ENCODE measurements at regions of chr6 and their contacts with region 1.

Region 1: DNA sequence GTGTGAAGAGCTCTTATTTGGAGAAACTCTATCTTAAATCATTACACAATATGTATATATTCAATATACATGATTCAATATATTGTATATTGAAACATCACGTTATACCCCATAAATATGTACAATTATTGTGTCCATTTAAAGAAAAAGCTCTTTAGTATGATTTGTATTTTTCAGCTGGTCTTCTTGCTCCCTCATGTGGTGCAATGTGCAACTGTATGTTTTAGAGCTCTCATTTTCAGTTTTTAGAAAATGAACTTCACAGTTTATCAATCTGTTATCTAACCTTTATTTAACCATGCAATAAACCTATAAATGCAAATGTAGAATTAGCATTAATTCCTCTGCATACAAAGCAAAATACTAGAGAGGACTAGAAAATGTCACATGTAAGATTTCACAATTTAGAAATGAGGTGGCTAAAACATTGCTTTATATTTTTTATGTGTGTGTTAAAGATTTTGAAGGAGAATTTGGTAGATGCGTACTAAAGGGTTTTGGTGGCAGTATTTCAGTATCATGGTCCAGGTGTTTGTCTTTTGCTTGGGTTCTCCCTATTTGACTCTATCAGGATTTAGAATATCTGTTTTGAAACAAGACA is 167.1 kb downstream of the PHF3 start:
- DNase-seq: peak; percentile 24 to 64 (median 53)
- H3K4me3 ChIP-seq: no peak overlapping the region
- H3K27ac ChIP-seq: no peak overlapping the region
- H3K4me1 ChIP-seq: peaks cover 5 to 28% (median 19%) of the 10 kb centered on the region in 4 experiments
- H3K27me3 ChIP-seq: no peaks in the 10 kb centered on the region

Region 2: GRCh38 chr6:63307581-63308246 is 495.0 kb before region 1 on chr6:
- CTCF ChIA-PET with region 1: interaction called, 19 read pairs
- POLR2A ChIA-PET with region 1: no interaction called
- DNase-seq: peak; percentile 17 to 56 (median 51)
- H3K4me3 ChIP-seq: no peak overlapping the region
- H3K27ac ChIP-seq: no peak overlapping the region
- H3K4me1 ChIP-seq: no peaks in the 10 kb centered on the region
- H3K27me3 ChIP-seq: no peaks in the 10 kb centered on the region

Region 3: GRCh38 chr6:63740709-63741108 is 62.0 kb before region 1 on chr6:
- CTCF ChIA-PET with region 1: no interaction called
- POLR2A ChIA-PET with region 1: no interaction called
- DNase-seq: no peak
- H3K4me3 ChIP-seq: no peak overlapping the region
- H3K27ac ChIP-seq: no peak overlapping the region
- H3K4me1 ChIP-seq: no peaks in the 10 kb centered on the region
- H3K27me3 ChIP-seq: no peaks in the 10 kb centered on the region

Region 4: DNA sequence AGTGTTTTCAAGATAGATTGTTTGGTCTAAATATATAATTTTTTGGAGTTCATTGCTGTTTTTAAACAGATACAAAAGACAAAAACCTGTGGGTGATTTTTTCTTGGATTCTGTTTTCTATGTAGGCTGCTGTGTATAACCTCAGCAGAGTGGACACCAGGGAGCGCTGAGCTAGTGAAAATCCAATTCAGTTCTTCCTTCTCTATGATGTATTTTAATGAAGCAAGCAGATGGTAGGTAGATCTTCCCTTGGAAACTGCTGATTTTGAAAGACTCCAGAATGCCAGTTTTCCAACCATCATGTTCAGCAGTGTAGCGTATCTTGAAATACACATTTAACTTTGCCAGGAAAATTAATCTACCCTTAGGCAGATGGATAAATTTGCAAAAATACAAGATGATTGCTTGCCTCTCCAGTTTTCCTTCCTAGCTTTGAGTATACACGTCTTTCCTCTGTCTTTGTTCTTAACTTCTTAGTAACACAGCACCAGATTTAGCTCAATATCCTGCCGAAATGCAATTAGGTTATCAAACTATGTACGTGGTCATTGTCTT is 10.9 kb after region 1 on chr6:
- CTCF ChIA-PET with region 1: interaction called, 16 read pairs
- POLR2A ChIA-PET with region 1: no interaction called
- DNase-seq: no peak
- H3K4me3 ChIP-seq: no peak overlapping the region
- H3K27ac ChIP-seq: no peak overlapping the region
- H3K4me1 ChIP-seq: no peaks in the 10 kb centered on the region
- H3K27me3 ChIP-seq: no peaks in the 10 kb centered on the region